CD4-positive, alpha-beta T cell (primary cell): ENCODE measurements at regions of chr13 and their contacts with region 1.

Region 1: DNA sequence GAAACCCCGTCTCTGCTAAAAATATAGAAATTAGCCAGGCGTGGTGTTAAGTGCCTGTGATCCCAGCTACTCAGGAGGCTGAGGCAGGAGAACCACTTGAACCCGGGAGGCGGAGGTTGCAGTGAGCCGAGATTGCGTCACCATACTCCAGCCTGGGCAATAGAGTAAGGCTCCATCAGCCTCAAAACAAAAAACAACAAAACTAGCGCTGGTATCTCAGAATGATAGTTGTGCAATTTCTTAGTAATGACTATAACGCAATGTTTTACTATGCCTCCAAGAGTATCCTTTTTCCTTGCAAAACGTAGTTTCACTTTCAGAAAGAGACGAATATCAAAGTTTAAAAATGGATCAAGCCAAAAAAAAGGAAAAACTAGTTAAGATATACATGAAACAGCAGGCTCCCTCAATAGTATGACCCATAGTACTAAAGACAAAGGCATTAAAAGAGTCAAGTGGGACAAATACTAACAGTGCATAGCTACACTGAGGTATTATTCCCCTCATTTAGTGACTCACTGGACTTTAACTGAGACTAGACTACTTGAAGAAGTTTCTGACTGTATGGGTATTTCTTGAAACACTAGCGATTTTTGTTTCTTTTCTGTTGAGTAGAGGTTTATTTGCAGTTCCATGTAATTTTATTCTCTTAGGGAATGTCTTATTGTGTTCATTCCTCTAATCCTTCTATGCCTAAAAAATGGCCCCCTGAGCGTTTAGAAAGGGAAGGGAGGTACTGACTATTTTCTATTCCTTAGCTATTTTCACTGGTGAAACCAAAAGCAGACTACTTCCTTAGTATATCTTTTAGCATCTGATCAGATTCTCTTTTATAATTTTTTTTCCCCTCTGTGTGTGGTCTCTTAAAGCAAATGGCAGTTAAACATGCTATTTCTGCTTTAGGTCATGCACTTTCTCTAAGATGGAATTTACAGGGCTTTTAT is 10.4 kb upstream of the ITM2B start:
- DNase-seq: peak in 3 of 14 experiments; percentile 33 to 40 (median 37)
- ATAC-seq: peak; percentile 34
- H3K4me3 ChIP-seq: peak overlapping the region; percentile 23
- H3K4me3 Mint-ChIP-seq: peak overlapping the region; percentile 81
- H3K27ac ChIP-seq: peak overlapping the region; percentile 70 to 90
- H3K27ac Mint-ChIP-seq: peak overlapping the region; percentile 97
- H3K4me1 ChIP-seq: peaks cover 43% of the 10 kb centered on the region
- H3K4me1 Mint-ChIP-seq: peaks cover 67% of the 10 kb centered on the region
- H3K27me3 ChIP-seq: no peaks in the 10 kb centered on the region
- H3K27me3 Mint-ChIP-seq: no peaks in the 10 kb centered on the region
- CTCF ChIP-seq: no peak

Region 2: GRCh38 chr13:48043789-48044503 is 178.7 kb before region 1 on chr13:
- CTCF ChIA-PET with region 1: no interaction called
- POLR2A ChIA-PET with region 1: no interaction called
- intact Hi-C with region 1: no loop called
- DNase-seq: peak in 1 of 14 experiments; percentile 6
- ATAC-seq: peak; percentile 55
- H3K4me3 ChIP-seq: no peak overlapping the region
- H3K4me3 Mint-ChIP-seq: no peak overlapping the region
- H3K27ac ChIP-seq: no peak overlapping the region
- H3K27ac Mint-ChIP-seq: peak overlapping the region; percentile 70
- H3K4me1 ChIP-seq: peaks cover 10% of the 10 kb centered on the region
- H3K4me1 Mint-ChIP-seq: peaks cover 22% of the 10 kb centered on the region
- H3K27me3 ChIP-seq: no peaks in the 10 kb centered on the region
- H3K27me3 Mint-ChIP-seq: no peaks in the 10 kb centered on the region
- CTCF ChIP-seq: no peak

Region 3: GRCh38 chr13:48126944-48127830 is 95.4 kb before region 1 on chr13:
- CTCF ChIA-PET with region 1: no interaction called
- POLR2A ChIA-PET with region 1: interaction called, 20 read pairs
- intact Hi-C with region 1: no loop called
- DNase-seq: peak; percentile 6 to 84 (median 32)
- ATAC-seq: peak; percentile 93
- H3K4me3 ChIP-seq: no peak overlapping the region
- H3K4me3 Mint-ChIP-seq: peak overlapping the region; percentile 23
- H3K27ac ChIP-seq: peak overlapping the region; percentile 61 to 73
- H3K27ac Mint-ChIP-seq: peak overlapping the region; percentile 91
- H3K4me1 ChIP-seq: peaks cover 11% of the 10 kb centered on the region
- H3K4me1 Mint-ChIP-seq: peaks cover 33% of the 10 kb centered on the region
- H3K27me3 ChIP-seq: no peaks in the 10 kb centered on the region
- H3K27me3 Mint-ChIP-seq: no peaks in the 10 kb centered on the region
- CTCF ChIP-seq: peak; percentile 81

Region 4: GRCh38 chr13:48184260-48184659 is 38.4 kb before region 1 on chr13:
- CTCF ChIA-PET with region 1: interaction called, 3 read pairs
- POLR2A ChIA-PET with region 1: interaction called, 70 read pairs
- intact Hi-C with region 1: loop called in 1 of 2 experiments (anchors 1 kb)
- DNase-seq: no peak
- ATAC-seq: no peak
- H3K4me3 ChIP-seq: no peak overlapping the region
- H3K4me3 Mint-ChIP-seq: peak overlapping the region; percentile 43
- H3K27ac ChIP-seq: peak overlapping the region in 1 of 2 donors; percentile 19
- H3K27ac Mint-ChIP-seq: peak overlapping the region; percentile 89
- H3K4me1 ChIP-seq: peaks cover 45% of the 10 kb centered on the region
- H3K4me1 Mint-ChIP-seq: peaks cover 68% of the 10 kb centered on the region
- H3K27me3 ChIP-seq: no peaks in the 10 kb centered on the region
- H3K27me3 Mint-ChIP-seq: no peaks in the 10 kb centered on the region
- CTCF ChIP-seq: no peak

Region 5: GRCh38 chr13:48199499-48199898 is 23.1 kb before region 1 on chr13:
- CTCF ChIA-PET with region 1: interaction called, 3 read pairs
- POLR2A ChIA-PET with region 1: interaction called, 15 read pairs
- intact Hi-C with region 1: no loop called
- DNase-seq: peak in 2 of 14 experiments; percentile 19 to 29
- ATAC-seq: no peak
- H3K4me3 ChIP-seq: no peak overlapping the region
- H3K4me3 Mint-ChIP-seq: no peak overlapping the region
- H3K27ac ChIP-seq: no peak overlapping the region
- H3K27ac Mint-ChIP-seq: peak overlapping the region; percentile 28
- H3K4me1 ChIP-seq: peaks cover 8% of the 10 kb centered on the region
- H3K4me1 Mint-ChIP-seq: peaks cover 22% of the 10 kb centered on the region
- H3K27me3 ChIP-seq: no peaks in the 10 kb centered on the region
- H3K27me3 Mint-ChIP-seq: no peaks in the 10 kb centered on the region
- CTCF ChIP-seq: no peak

Region 6: GRCh38 chr13:48210178-48210577 is 12.5 kb before region 1 on chr13:
- CTCF ChIA-PET with region 1: interaction called, 3 read pairs
- POLR2A ChIA-PET with region 1: interaction called, 11 read pairs
- intact Hi-C with region 1: no loop called
- DNase-seq: peak in 2 of 14 experiments; percentile 21 to 49
- ATAC-seq: no peak
- H3K4me3 ChIP-seq: no peak overlapping the region
- H3K4me3 Mint-ChIP-seq: no peak overlapping the region
- H3K27ac ChIP-seq: no peak overlapping the region
- H3K27ac Mint-ChIP-seq: no peak overlapping the region
- H3K4me1 ChIP-seq: peaks cover 5% of the 10 kb centered on the region
- H3K4me1 Mint-ChIP-seq: peaks cover 12% of the 10 kb centered on the region
- H3K27me3 ChIP-seq: no peaks in the 10 kb centered on the region
- H3K27me3 Mint-ChIP-seq: no peaks in the 10 kb centered on the region
- CTCF ChIP-seq: no peak

Region 7: DNA sequence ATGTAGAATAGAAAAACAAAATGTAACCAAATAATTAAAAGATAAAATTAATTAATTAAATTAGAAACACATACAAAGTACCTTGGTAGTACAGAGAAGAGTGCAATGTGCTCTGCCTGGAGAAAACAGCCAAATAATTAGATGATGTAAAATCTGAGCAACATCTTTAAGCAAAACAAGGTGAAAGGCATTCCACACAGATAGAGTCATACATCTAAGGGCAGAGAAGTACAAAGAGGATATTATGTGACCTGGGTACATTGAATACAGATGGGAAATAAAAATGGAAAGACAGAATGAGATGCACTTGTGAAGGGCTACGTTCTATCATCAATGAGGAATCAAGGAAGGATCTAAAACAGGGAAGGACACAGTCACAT is 727.9 kb after region 1 on chr13:
- CTCF ChIA-PET with region 1: no interaction called
- POLR2A ChIA-PET with region 1: no interaction called
- intact Hi-C with region 1: no loop called
- DNase-seq: no peak
- ATAC-seq: no peak
- H3K4me3 ChIP-seq: no peak overlapping the region
- H3K4me3 Mint-ChIP-seq: no peak overlapping the region
- H3K27ac ChIP-seq: no peak overlapping the region
- H3K27ac Mint-ChIP-seq: no peak overlapping the region
- H3K4me1 ChIP-seq: no peaks in the 10 kb centered on the region
- H3K4me1 Mint-ChIP-seq: no peaks in the 10 kb centered on the region
- H3K27me3 ChIP-seq: no peaks in the 10 kb centered on the region
- H3K27me3 Mint-ChIP-seq: no peaks in the 10 kb centered on the region
- CTCF ChIP-seq: no peak